HCT116 (cell line): ENCODE measurements at regions of chr14 and their contacts with region 1.

Region 1: GRCh38 chr14:55354500-55354899 is 57.1 kb downstream of the ATG14 start:
- DNase-seq: peak; percentile 26
- ATAC-seq: peak; percentile 88
- H3K4me3 ChIP-seq: no peak overlapping the region
- H3K27ac ChIP-seq: no peak overlapping the region
- H3K4me1 ChIP-seq: peaks cover 0 to 11% of the 10 kb centered on the region in 2 experiments; a peak in 2 of 4 replicates
- H3K27me3 ChIP-seq: no peaks in the 10 kb centered on the region
- CTCF ChIP-seq: peak; percentile 63 to 73 (median 70); a peak in 5 of 6 replicates
- POLR2A ChIP-seq: no peak
- RAD21 ChIP-seq: peak; percentile 74

Region 2: GRCh38 chr14:55212634-55213033 is 141.9 kb before region 1 on chr14:
- CTCF ChIA-PET with region 1: interaction called, 8 read pairs
- POLR2A ChIA-PET with region 1: no interaction called
- RAD21 ChIA-PET with region 1: interaction called in 1 of 2 experiments, 4 read pairs
- intact Hi-C with region 1: loop called (anchors 2 kb)
- DNase-seq: no peak
- ATAC-seq: peak; percentile 30
- H3K4me3 ChIP-seq: no peak overlapping the region
- H3K27ac ChIP-seq: no peak overlapping the region
- H3K4me1 ChIP-seq: peaks cover 0 to 5% of the 10 kb centered on the region in 2 experiments; a peak in 2 of 4 replicates
- H3K27me3 ChIP-seq: no peaks in the 10 kb centered on the region
- CTCF ChIP-seq: no peak
- POLR2A ChIP-seq: no peak
- RAD21 ChIP-seq: no peak

Region 3: GRCh38 chr14:55245657-55246268 is 108.7 kb before region 1 on chr14:
- CTCF ChIA-PET with region 1: interaction called, 11 read pairs
- POLR2A ChIA-PET with region 1: no interaction called
- RAD21 ChIA-PET with region 1: no interaction called
- intact Hi-C with region 1: no loop called
- DNase-seq: peak; percentile 21
- ATAC-seq: peak; percentile 86
- H3K4me3 ChIP-seq: no peak overlapping the region
- H3K27ac ChIP-seq: no peak overlapping the region
- H3K4me1 ChIP-seq: no peaks in the 10 kb centered on the region
- H3K27me3 ChIP-seq: peaks cover 14% of the 10 kb centered on the region
- CTCF ChIP-seq: peak; percentile 53 to 80 (median 78); a peak in 5 of 6 replicates
- POLR2A ChIP-seq: no peak
- RAD21 ChIP-seq: peak; percentile 54; the same call in 1 of the 2 replicates

Region 4: GRCh38 chr14:55270832-55271565 is 83.5 kb before region 1 on chr14 and contains the start of gene FBXO34:
- CTCF ChIA-PET with region 1: interaction called, 10 read pairs
- POLR2A ChIA-PET with region 1: no interaction called
- RAD21 ChIA-PET with region 1: no interaction called
- intact Hi-C with region 1: no loop called
- DNase-seq: peak; percentile 95
- ATAC-seq: peak; percentile 92
- H3K4me3 ChIP-seq: peak within 1 kb of the TSS; percentile 83 to 93
- H3K27ac ChIP-seq: peak within 1 kb of the TSS; percentile 81
- H3K4me1 ChIP-seq: peaks cover 8 to 16% of the 10 kb centered on the region in 2 experiments; a peak in 3 of 4 replicates
- H3K27me3 ChIP-seq: no peaks in the 10 kb centered on the region
- CTCF ChIP-seq: peak; percentile 98 to 99 (median 99)
- POLR2A ChIP-seq: peak; percentile 91
- RAD21 ChIP-seq: peak; percentile 83
- total RNA-seq, gene FBXO34: 26.9 TPM

Region 5: GRCh38 chr14:55281316-55281839 is 73.1 kb before region 1 on chr14:
- CTCF ChIA-PET with region 1: no interaction called
- POLR2A ChIA-PET with region 1: no interaction called
- RAD21 ChIA-PET with region 1: no interaction called
- intact Hi-C with region 1: no loop called
- DNase-seq: no peak
- ATAC-seq: no peak
- H3K4me3 ChIP-seq: no peak overlapping the region
- H3K27ac ChIP-seq: no peak overlapping the region
- H3K4me1 ChIP-seq: peaks cover 0 to 6% of the 10 kb centered on the region in 2 experiments; a peak in 1 of 4 replicates
- H3K27me3 ChIP-seq: no peaks in the 10 kb centered on the region
- CTCF ChIP-seq: no peak
- POLR2A ChIP-seq: no peak
- RAD21 ChIP-seq: no peak